H1 (cell line): ENCODE measurements at regions of chr1 and their contacts with region 1.

Region 1: DNA sequence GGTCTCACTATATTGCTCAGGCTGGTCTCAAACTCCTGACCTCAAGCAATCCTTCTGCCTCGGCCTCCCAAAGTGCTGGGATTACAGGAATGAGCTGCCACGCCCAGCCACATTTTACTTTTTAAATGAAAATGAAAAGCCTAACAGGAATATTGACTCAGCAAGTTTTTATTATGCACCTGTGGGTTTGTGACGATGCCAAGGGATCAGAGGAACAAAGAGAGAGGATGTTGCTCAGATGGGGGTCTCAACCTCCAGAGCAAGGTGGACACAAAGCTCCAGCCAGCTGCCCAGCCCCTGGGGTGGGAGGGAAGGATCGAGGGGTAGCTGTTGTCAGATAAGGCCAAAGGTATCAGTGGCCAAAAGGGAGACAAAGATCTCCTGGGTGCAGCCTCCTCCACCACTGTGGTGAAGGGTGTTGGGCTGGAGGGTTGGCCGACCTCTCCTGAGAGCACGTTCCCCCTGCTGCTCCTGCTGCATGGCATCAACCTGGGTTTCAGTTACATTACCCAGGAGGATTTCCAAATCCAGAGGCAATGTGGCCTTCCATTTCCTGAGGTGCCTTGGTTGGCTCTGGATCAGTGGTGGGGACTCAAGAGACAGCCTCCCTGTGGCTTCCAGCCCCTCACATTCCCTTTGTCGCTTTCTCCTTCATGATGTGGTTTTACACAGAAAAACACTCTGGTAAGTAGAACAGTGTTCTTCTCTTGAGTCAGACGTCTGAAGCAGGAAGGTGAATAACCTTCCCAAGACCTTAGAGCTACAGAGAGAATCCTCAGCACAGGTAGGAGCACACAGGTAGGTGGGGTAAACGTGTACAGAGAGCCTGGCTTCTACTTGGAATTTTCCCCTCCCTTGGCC is 34.2 kb downstream of the ZNF496 start:
- DNase-seq: no peak
- H3K4me3 ChIP-seq: no peak overlapping the region
- H3K27ac ChIP-seq: peak overlapping the region; percentile 8
- H3K4me1 ChIP-seq: peaks cover 23 to 47% (median 44%) of the 10 kb centered on the region in 4 experiments
- H3K27me3 ChIP-seq: no peaks in the 10 kb centered on the region
- CTCF ChIP-seq: no peak
- EP300 ChIP-seq: no peak
- POLR2A ChIP-seq: no peak
- RAD21 ChIP-seq: no peak

Region 2: GRCh38 chr1:247322849-247323586 is 25.5 kb after region 1 on chr1:
- CTCF ChIA-PET with region 1: interaction called, 5 read pairs
- POLR2A ChIA-PET with region 1: interaction called, 17 read pairs
- DNase-seq: no peak
- H3K4me3 ChIP-seq: no peak overlapping the region
- H3K27ac ChIP-seq: no peak overlapping the region
- H3K4me1 ChIP-seq: peaks cover 0 to 6% (median 1%) of the 10 kb centered on the region in 4 experiments; a peak in 1 of 7 replicates
- H3K27me3 ChIP-seq: no peaks in the 10 kb centered on the region
- CTCF ChIP-seq: no peak
- EP300 ChIP-seq: no peak
- POLR2A ChIP-seq: no peak
- RAD21 ChIP-seq: no peak

Region 3: GRCh38 chr1:247331172-247331991 is 33.9 kb after region 1 on chr1 and contains the start of gene ZNF496:
- CTCF ChIA-PET with region 1: interaction called, 4 read pairs
- POLR2A ChIA-PET with region 1: interaction called, 46 read pairs
- DNase-seq: peak; percentile 50 to 93
- H3K4me3 ChIP-seq: peak within 1 kb of the TSS; percentile 83 to 94 (median 88)
- H3K27ac ChIP-seq: peak within 1 kb of the TSS; percentile 87
- H3K4me1 ChIP-seq: peaks cover 9 to 35% (median 27%) of the 10 kb centered on the region in 4 experiments
- H3K27me3 ChIP-seq: no peaks in the 10 kb centered on the region
- CTCF ChIP-seq: no peak
- EP300 ChIP-seq: no peak
- POLR2A ChIP-seq: no peak; a peak in 1 of 3 replicates
- RAD21 ChIP-seq: no peak
- total RNA-seq, gene ZNF496: 64.2 and 71.4 TPM in 2 replicates